Spleen (tissue), 13 donors: ENCODE measurements at regions of chr10 and their contacts with region 1.

Region 1: GRCh38 chr10:28180654-28181053 is 122.2 kb downstream of the MPP7 start:
- DNase-seq: no peak
- H3K4me3 ChIP-seq: no peak overlapping the region
- H3K27ac ChIP-seq: no peak overlapping the region
- H3K4me1 ChIP-seq: peaks cover 4 to 23% (median 17%) of the 10 kb centered on the region in 6 donors
- H3K27me3 ChIP-seq: no peaks in the 10 kb centered on the region
- CTCF ChIP-seq: no peak
- POLR2A ChIP-seq: no peak

Region 2: DNA sequence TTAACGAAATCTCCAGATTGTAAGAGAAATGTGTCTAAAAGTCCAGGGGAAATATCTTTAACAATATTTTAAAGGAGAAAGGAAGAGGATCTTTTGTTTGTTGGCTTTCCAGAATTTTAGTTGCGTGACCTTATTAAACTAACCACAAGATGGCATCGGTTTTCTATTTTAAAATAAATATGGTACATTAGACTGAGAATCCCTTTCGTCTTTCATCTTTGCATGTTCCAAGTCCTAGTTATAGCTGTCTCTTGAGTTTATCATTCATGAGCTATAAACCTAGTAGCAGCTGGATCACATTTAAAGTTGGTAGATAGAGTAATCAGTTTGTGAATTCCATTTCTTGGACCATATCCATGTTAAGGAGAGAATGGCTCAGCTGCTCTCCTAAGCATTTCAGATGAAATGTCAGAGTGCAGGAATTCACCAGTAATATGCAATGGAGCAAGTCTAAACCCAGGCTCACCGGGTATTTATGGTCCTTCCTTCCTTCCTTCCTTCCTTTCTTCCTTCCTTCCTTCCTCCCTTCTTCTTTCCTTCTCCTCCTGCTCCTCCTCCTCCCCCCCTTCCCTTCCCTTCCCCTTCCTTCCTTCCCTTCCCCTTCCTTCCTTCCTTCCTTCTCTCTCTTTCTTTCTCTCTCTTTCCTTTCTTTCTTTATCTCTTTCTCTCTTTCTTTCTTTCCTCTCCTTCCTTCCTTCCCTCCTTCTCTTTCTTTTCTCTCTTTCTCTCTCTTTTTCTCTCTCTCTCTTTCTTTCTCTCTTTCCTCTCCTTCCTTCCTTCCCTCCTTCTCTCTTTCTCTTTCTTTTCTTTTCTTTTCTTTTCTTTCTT is 734.3 kb before region 1 on chr10:
- intact Hi-C with region 1: loop called (anchors 10 kb)
- DNase-seq: no peak
- H3K4me3 ChIP-seq: no peak overlapping the region
- H3K27ac ChIP-seq: peak overlapping the region in 2 of 8 donors; percentile 74 to 80
- H3K4me1 ChIP-seq: peaks cover 0 to 42% (median 2%) of the 10 kb centered on the region in 6 donors
- H3K27me3 ChIP-seq: no peaks in the 10 kb centered on the region
- CTCF ChIP-seq: peak in 9 of 11 experiments; percentile 19 to 58 (median 54)
- POLR2A ChIP-seq: no peak

Region 3: DNA sequence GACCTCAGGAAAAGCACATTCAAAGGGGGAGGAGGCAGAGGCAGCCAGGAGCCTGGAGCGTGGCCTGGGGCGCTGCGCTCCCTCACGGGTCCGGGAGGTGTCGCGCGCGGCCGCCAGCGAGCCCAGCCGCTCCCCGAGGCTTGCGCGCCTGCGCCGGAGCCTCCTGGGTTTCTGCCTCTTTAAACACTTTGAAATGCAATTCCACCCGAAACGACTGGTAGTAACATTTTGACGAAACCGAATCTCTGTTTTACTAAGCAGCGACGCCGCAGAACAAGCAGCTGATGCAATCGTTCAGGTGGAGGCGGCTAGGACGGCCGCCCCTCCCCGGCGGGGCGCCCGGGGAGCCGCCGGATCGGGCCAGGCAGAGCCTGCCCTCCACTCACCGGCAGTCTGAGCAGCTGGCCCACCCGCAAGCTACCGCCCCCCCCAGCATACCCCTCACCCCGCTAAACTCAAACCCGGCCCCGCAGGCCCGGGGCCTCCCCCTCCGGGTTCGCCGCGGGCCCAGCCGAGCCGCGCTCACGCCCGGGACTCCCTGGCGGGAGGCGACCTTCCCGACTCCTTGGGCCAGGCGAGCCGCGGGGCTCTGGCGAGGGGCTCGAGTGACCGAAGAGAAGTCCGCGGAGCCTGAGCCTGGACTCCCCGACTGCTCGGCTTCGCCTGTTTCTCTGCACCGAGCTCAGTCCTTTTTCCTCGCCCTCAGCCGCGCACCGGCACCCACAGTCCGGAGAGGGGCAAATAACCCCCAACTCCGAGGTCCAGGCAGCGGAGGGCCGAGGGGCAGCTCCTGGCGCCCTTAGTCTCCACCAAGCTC is 438.3 kb before region 1 on chr10:
- intact Hi-C with region 1: loop called (anchors 5 kb)
- DNase-seq: peak; percentile 92
- H3K4me3 ChIP-seq: peak overlapping the region; percentile 55 to 89 (median 70)
- H3K27ac ChIP-seq: peak overlapping the region in 4 of 8 donors; percentile 14 to 47 (median 36)
- H3K4me1 ChIP-seq: peaks cover 34 to 64% (median 57%) of the 10 kb centered on the region in 6 donors
- H3K27me3 ChIP-seq: peaks cover 17 to 92% (median 71%) of the 10 kb centered on the region in 7 donors
- CTCF ChIP-seq: peak; percentile 12 to 88 (median 74)
- POLR2A ChIP-seq: no peak

Region 4: GRCh38 chr10:28241741-28242399 is 61.2 kb after region 1 on chr10:
- intact Hi-C with region 1: no loop called
- DNase-seq: no peak
- H3K4me3 ChIP-seq: no peak overlapping the region
- H3K27ac ChIP-seq: peak overlapping the region in 1 of 8 donors; percentile 65
- H3K4me1 ChIP-seq: peaks cover 0 to 26% (median 7%) of the 10 kb centered on the region in 6 donors
- H3K27me3 ChIP-seq: no peaks in the 10 kb centered on the region
- CTCF ChIP-seq: peak; percentile 52 to 81 (median 73)
- POLR2A ChIP-seq: no peak

Region 5: GRCh38 chr10:28503114-28503513 is 322.5 kb after region 1 on chr10:
- intact Hi-C with region 1: no loop called
- DNase-seq: no peak
- H3K4me3 ChIP-seq: no peak overlapping the region
- H3K27ac ChIP-seq: no peak overlapping the region
- H3K4me1 ChIP-seq: peaks cover 0 to 5% (median 0%) of the 10 kb centered on the region in 6 donors
- H3K27me3 ChIP-seq: no peaks in the 10 kb centered on the region
- CTCF ChIP-seq: no peak
- POLR2A ChIP-seq: no peak